ENCODE measurements at regions of chr1 and their contacts with region 1.

Region 1: GRCh38 chr1:215243345-215244054 is 161.0 kb downstream of the KCNK2 start:
- DNase-seq: no peak
- H3K4me3 Mint-ChIP-seq: no peak overlapping the region
- H3K27ac Mint-ChIP-seq: no peak overlapping the region
- H3K4me1 Mint-ChIP-seq: no peaks in the 10 kb centered on the region
- H3K27me3 Mint-ChIP-seq: no peaks in the 10 kb centered on the region
- CTCF ChIP-seq: no peak

Region 2: DNA sequence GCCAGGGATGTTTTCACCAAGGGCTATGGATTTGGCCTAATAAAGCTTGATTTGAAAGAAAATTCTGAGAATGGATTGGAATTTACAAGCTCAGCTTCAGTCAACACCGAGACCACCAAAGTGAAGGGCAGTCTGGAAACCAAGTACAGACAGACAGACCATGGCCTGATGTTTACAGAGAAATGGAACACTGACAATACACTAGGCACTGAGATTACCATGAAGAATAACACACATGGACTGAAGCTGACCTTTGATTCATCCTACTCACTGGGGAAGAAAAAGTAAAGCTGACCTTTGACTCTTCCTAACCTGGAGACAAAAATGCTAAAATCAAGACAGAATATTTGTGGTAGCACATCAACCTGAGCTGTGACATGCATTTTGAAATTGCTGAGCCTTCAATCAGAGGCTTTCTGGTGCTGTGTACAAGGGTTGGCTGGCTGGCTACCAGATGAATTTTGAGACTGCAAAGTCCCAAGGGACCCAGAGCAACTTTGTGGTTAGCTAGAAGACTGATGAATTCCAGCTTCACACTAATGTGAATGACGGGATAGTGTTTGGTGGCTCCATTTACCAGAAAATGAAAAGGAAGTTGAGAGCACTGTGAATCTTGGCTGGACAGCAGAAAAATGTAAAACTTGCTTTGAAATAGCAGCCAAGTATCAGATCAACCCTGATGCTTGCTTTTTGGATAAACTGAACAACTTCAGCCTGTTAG is 133.2 kb after region 1 on chr1:
- CTCF ChIA-PET with region 1: no interaction called
- intact Hi-C with region 1: loop called (anchors 5 kb)
- DNase-seq: no peak
- H3K4me3 Mint-ChIP-seq: no peak overlapping the region
- H3K27ac Mint-ChIP-seq: no peak overlapping the region
- H3K4me1 Mint-ChIP-seq: no peaks in the 10 kb centered on the region
- H3K27me3 Mint-ChIP-seq: no peaks in the 10 kb centered on the region
- CTCF ChIP-seq: no peak

Measured in Calu3 (cell line).